Dendritic cell treated with granulocyte-macrophage colony-stimulating factor and Interleukin-4, amounts not matched to agents 40 ng/mL and 50 ng/mL, for 4 days (primary cell): ENCODE measurements at regions of chr4 and their contacts with region 1.

Region 1: GRCh38 chr4:168917138-168917779 is 92.8 kb downstream of the CBR4 start:
- H3K4me3 Mint-ChIP-seq: no peak overlapping the region
- H3K27ac Mint-ChIP-seq: no peak overlapping the region
- H3K4me1 Mint-ChIP-seq: no peaks in the 10 kb centered on the region
- H3K27me3 Mint-ChIP-seq: no peaks in the 10 kb centered on the region

Region 2: GRCh38 chr4:168153596-168154440 is 763.4 kb before region 1 on chr4:
- intact Hi-C with region 1: no loop called
- H3K4me3 Mint-ChIP-seq: no peak overlapping the region
- H3K27ac Mint-ChIP-seq: no peak overlapping the region
- H3K4me1 Mint-ChIP-seq: no peaks in the 10 kb centered on the region
- H3K27me3 Mint-ChIP-seq: no peaks in the 10 kb centered on the region

Region 3: GRCh38 chr4:168584321-168584771 is 332.9 kb before region 1 on chr4:
- intact Hi-C with region 1: loop called (anchors 5 kb)
- H3K4me3 Mint-ChIP-seq: no peak overlapping the region
- H3K27ac Mint-ChIP-seq: no peak overlapping the region
- H3K4me1 Mint-ChIP-seq: no peaks in the 10 kb centered on the region
- H3K27me3 Mint-ChIP-seq: peaks cover 2% of the 10 kb centered on the region